Activated CD4-positive, alpha-beta memory T cell treated with anti-CD3 and anti-CD28 coated beads for 36 hours (primary cell): ENCODE measurements at regions of chr9 and their contacts with region 1.

Region 1: DNA sequence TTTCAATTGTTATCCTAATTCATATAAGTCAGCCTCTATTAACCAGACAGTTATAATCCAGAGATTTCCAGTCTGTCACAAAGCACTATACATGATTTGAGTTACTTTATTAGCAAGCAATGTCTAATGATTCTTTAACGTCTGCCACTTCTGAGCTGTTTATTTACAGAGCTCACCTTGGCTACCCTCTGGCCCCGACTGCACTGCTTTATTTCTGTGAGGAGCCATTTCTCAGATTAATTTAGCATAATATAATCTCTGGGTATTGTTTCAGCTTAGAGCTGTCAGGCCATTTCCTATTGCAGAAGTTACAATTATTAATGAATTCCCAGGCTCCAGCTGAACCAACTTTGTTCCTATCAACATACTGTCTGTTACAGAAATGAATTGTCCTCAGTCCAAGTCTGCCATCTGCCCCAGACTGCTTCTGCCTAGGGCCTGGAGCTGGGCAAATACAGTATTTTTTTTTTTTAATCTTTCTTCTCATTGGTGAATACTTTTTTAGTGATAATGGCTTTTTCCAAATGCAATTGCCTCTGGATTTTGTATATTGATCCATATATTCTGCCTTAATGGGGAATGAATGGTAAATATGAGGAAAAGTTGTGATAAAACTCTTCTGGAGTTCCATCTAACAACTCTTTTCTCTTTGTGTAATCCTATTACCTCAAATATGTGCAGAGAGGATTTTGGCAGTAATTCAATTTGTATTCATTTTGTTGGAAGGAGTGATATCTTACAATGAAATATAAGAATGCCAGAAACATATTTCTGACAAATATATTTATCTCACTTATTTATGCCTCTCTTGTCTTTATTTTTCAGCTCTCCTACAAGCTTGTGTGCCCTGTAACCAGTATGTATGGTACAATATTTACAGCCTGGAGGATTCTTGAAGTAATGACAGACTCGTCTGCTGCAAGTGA is 104.7 kb downstream of the FOCAD start:
- DNase-seq: no peak
- H3K4me3 Mint-ChIP-seq: no peak overlapping the region
- H3K27ac Mint-ChIP-seq: no peak overlapping the region
- H3K4me1 Mint-ChIP-seq: no peaks in the 10 kb centered on the region
- H3K27me3 Mint-ChIP-seq: no peaks in the 10 kb centered on the region

Region 2: GRCh38 chr9:20771729-20772128 is 17.1 kb before region 1 on chr9:
- CTCF ChIA-PET with region 1: no interaction called
- POLR2A ChIA-PET with region 1: no interaction called
- intact Hi-C with region 1: no loop called
- DNase-seq: no peak
- H3K4me3 Mint-ChIP-seq: no peak overlapping the region
- H3K27ac Mint-ChIP-seq: no peak overlapping the region
- H3K4me1 Mint-ChIP-seq: no peaks in the 10 kb centered on the region
- H3K27me3 Mint-ChIP-seq: no peaks in the 10 kb centered on the region

Region 3: GRCh38 chr9:20823051-20823450 is 34.3 kb after region 1 on chr9:
- CTCF ChIA-PET with region 1: no interaction called
- POLR2A ChIA-PET with region 1: no interaction called
- intact Hi-C with region 1: no loop called
- DNase-seq: no peak
- H3K4me3 Mint-ChIP-seq: no peak overlapping the region
- H3K27ac Mint-ChIP-seq: no peak overlapping the region
- H3K4me1 Mint-ChIP-seq: no peaks in the 10 kb centered on the region
- H3K27me3 Mint-ChIP-seq: no peaks in the 10 kb centered on the region

Region 4: DNA sequence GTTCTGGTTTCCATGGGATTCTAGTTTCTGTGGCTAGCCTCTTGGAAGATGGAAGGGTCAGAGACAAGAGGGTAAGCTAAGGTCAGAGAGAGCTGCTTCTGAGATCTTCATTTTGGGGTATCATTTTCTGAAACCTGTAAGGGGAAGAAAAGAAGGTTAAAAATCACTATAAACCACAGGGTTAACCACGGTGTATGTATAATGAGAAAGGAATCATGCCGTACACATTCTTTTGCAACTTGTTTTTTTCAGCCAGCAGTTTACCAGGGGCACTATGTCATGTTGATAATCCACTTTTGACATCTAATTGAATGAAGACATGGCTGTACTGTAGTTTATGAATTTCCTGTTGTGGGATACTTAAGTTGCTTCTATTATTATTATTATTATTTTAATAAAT is 59.7 kb after region 1 on chr9:
- CTCF ChIA-PET with region 1: no interaction called
- POLR2A ChIA-PET with region 1: no interaction called
- intact Hi-C with region 1: loop called (anchors 10 kb)
- DNase-seq: no peak
- H3K4me3 Mint-ChIP-seq: no peak overlapping the region
- H3K27ac Mint-ChIP-seq: no peak overlapping the region
- H3K4me1 Mint-ChIP-seq: no peaks in the 10 kb centered on the region
- H3K27me3 Mint-ChIP-seq: no peaks in the 10 kb centered on the region